MCF 10A (cell line): ENCODE measurements at regions of chr7 and their contacts with region 1.

Region 1: DNA sequence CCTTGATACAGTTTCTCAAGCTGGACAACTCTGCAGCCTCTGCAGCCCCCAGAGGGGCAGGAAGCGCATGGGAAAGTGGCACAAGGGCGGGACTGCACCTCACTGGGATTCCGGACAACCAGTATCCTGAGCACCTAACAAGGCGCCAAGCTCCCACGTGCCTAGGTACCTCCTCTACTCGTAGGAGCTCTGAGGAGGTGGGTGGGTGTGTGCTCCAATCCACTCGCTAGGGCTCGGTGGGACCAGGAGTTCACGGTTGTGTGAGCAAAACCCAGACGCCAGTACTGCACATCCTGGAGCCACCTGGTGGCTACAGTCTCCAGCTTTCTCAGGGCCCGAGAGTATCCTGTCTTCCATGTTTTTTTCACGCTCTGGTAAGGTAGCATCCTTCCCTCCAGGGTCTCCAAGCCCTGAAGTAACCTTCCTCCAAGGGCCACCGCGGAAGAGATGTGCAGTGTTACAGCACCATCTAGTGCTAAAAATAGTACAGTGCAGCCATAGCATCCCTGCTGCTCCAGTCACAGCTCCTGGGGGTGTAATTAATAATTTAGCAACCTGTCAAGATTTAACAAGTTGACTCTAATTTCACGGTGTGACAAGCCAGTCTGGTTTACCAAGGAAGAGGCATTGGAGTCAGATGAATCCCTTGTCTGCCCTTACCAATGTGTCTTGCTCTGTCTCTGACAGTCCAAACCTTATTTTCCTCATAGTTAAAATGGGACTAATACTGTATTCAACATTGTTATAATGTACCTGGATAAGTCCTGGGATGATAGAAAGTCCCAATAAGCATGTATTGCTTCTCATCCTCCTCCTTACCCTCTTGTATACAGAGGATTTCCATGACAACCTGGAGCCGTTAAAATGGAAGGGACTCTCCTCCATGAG is 70.4 kb downstream of the HERPUD2 start:
- DNase-seq: peak; percentile 51
- H3K4me3 Mint-ChIP-seq: no peak overlapping the region
- H3K27ac Mint-ChIP-seq: no peak overlapping the region
- H3K4me1 Mint-ChIP-seq: no peaks in the 10 kb centered on the region
- H3K27me3 Mint-ChIP-seq: no peaks in the 10 kb centered on the region
- CTCF ChIP-seq: peak; percentile 85

Region 2: GRCh38 chr7:35185907-35186731 is 438.4 kb before region 1 on chr7:
- CTCF ChIA-PET with region 1: interaction called, 10 read pairs
- POLR2A ChIA-PET with region 1: no interaction called
- intact Hi-C with region 1: no loop called
- DNase-seq: no peak
- H3K4me3 Mint-ChIP-seq: peak overlapping the region; percentile 66
- H3K27ac Mint-ChIP-seq: no peak overlapping the region
- H3K4me1 Mint-ChIP-seq: peaks cover 6% of the 10 kb centered on the region
- H3K27me3 Mint-ChIP-seq: peaks cover 34% of the 10 kb centered on the region
- CTCF ChIP-seq: no peak

Region 3: DNA sequence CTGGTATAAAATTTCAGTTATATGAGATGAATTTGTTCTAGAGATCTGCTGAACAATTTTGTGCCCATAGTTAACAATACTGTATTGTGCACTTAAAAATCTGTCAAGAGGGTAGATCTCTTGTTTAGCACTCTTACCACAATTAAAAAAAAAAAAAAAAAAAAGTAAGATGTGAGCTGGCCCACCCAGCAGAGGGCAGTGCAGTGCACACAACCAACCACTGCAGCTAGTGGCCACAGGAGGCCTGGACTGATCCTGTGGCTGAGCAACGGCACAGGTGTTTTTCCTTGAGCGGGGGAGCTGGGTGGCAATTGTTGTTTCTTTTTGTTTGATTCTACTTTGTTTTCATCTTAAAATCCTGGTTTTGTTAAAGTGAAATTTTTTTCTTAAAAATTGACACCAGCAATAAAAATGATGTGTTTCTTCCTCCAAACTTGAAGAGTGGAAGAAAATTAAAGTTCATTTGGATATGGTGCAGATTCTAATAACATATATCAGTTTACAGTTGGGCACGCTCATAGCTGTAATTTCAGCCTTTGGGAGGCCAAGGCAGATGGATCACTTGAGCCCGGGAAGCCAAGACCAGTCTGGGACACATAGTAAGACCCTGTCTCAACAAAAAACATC is 199.6 kb before region 1 on chr7:
- CTCF ChIA-PET with region 1: interaction called, 42 read pairs
- POLR2A ChIA-PET with region 1: no interaction called
- intact Hi-C with region 1: loop called (anchors 1 kb)
- DNase-seq: peak; percentile 60
- H3K4me3 Mint-ChIP-seq: no peak overlapping the region
- H3K27ac Mint-ChIP-seq: no peak overlapping the region
- H3K4me1 Mint-ChIP-seq: no peaks in the 10 kb centered on the region
- H3K27me3 Mint-ChIP-seq: peaks cover 38% of the 10 kb centered on the region
- CTCF ChIP-seq: peak; percentile 70

Region 4: GRCh38 chr7:35537067-35538023 is 87.2 kb before region 1 on chr7:
- CTCF ChIA-PET with region 1: interaction called, 36 read pairs
- POLR2A ChIA-PET with region 1: no interaction called
- intact Hi-C with region 1: loop called (anchors 5 kb)
- DNase-seq: peak; percentile 71
- H3K4me3 Mint-ChIP-seq: peak overlapping the region; percentile 60
- H3K27ac Mint-ChIP-seq: no peak overlapping the region
- H3K4me1 Mint-ChIP-seq: no peaks in the 10 kb centered on the region
- H3K27me3 Mint-ChIP-seq: peaks cover 34% of the 10 kb centered on the region
- CTCF ChIP-seq: peak; percentile 87

Region 5: DNA sequence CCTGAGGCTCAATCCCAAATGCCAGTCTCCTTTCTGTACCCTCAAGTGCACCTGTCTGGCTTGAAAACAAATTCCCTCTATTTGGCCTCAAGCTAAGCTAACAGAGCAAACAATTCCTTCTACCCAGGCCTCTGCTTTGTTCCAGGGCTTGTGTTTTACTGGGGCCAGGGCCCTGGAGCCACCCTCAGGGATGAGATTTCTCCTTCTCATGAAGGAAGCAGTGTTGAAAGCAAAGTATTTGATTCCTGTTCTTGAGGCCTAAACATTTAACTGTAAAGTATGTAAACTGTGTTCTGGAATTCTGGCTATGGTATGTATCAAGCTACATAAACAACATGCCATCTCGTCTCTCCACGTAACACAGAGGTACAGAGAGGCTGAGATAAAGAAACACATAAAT is 11.4 kb before region 1 on chr7:
- CTCF ChIA-PET with region 1: interaction called, 73 read pairs
- POLR2A ChIA-PET with region 1: interaction called, 4 read pairs
- intact Hi-C with region 1: no loop called
- DNase-seq: no peak
- H3K4me3 Mint-ChIP-seq: no peak overlapping the region
- H3K27ac Mint-ChIP-seq: no peak overlapping the region
- H3K4me1 Mint-ChIP-seq: peaks cover 6% of the 10 kb centered on the region
- H3K27me3 Mint-ChIP-seq: no peaks in the 10 kb centered on the region
- CTCF ChIP-seq: no peak

Region 6: GRCh38 chr7:35647171-35647574 is 22.6 kb after region 1 on chr7:
- CTCF ChIA-PET with region 1: interaction called, 22 read pairs
- POLR2A ChIA-PET with region 1: no interaction called
- intact Hi-C with region 1: no loop called
- DNase-seq: no peak
- H3K4me3 Mint-ChIP-seq: no peak overlapping the region
- H3K27ac Mint-ChIP-seq: no peak overlapping the region
- H3K4me1 Mint-ChIP-seq: peaks cover 12% of the 10 kb centered on the region
- H3K27me3 Mint-ChIP-seq: no peaks in the 10 kb centered on the region
- CTCF ChIP-seq: no peak